ENCODE measurements at regions of chr17 and their contacts with region 1.

Region 1: DNA sequence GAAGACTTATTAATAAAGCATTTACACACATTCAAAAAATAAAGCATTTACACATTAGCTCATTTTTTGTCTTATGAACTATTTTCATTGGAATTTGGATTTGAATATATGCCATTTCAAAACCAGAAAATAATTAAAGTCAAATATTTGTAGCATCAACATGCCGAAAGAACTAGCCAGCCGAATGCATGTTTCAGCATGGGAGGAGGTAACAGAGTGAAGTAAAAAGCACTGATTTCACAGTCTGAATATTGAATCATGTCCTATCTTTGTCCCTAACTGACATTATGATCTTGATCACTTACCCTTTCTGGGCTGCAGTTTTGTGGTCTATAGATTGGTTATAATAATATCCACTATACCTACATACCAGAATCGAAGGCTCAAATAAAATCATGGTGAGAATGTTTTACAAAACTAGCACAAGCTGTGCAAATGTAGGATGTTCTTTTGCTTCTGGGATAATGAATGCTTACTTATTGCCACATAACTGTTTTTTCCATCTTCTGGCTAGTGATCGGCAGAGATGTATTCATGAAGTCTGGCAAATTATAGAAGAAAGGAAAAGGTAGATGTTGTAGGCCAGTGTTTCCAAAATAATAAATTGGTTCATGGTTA is 84.7 kb downstream of the TUBD1 start:
- DNase-seq: no peak
- H3K4me3 ChIP-seq: no peak overlapping the region
- H3K27ac ChIP-seq: no peak overlapping the region
- H3K4me1 ChIP-seq: no peaks in the 10 kb centered on the region
- H3K27me3 ChIP-seq: no peaks in the 10 kb centered on the region
- CTCF ChIP-seq: no peak
- POLR2A ChIP-seq: no peak

Region 2: GRCh38 chr17:59778996-59779395 is 29.0 kb before region 1 on chr17:
- CTCF ChIA-PET with region 1: no interaction called
- POLR2A ChIA-PET with region 1: no interaction called
- dilution Hi-C with region 1: no loop called
- intact Hi-C with region 1: no loop called
- DNase-seq: no peak
- H3K4me3 ChIP-seq: no peak overlapping the region
- H3K27ac ChIP-seq: no peak overlapping the region
- H3K4me1 ChIP-seq: peaks cover 19% of the 10 kb centered on the region
- H3K27me3 ChIP-seq: no peaks in the 10 kb centered on the region
- CTCF ChIP-seq: no peak
- POLR2A ChIP-seq: no peak

Region 3: DNA sequence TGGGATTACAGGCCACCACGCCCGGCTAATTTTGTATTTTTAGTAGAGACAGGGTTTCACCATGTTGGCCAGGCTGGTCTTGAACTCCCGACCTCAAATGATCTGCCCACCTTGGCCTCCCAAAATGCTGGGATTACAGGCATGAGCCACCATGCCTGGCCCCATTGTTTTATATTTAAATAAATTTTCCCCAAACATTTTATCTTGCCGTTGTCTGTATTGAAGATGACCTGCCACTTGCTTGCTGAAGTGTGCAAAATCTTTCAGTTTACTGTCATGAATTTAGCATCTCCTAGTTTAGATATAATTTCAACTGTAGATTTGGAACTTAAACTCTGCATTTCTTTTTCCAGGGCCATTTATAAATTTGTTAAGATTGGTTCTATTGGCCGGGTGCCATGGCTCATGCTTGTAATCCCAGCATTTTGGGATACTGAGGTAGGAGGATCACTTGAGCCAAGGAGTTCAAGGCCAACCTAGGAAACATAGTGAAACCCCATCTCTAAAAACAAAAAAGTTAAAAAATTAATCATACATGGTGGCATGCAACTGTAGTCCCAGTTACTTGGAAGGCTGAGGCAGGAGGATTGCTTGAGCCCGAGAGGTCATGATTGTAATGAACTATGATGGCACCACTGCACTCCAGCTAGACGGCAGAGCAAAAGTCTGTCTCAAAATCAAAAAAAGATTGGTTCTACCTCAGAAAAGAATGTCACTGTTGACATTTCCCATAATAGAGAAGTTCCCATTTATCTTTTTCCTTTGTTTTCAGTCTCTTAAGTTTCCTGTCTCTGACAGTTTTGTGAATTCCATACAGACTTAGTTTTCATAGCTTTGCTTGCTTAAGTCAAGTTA is 16.2 kb before region 1 on chr17:
- CTCF ChIA-PET with region 1: interaction called, 10 read pairs
- POLR2A ChIA-PET with region 1: no interaction called
- dilution Hi-C with region 1: no loop called
- intact Hi-C with region 1: no loop called
- DNase-seq: peak; percentile 85
- H3K4me3 ChIP-seq: no peak overlapping the region
- H3K27ac ChIP-seq: peak overlapping the region; percentile 94
- H3K4me1 ChIP-seq: peaks cover 37% of the 10 kb centered on the region
- H3K27me3 ChIP-seq: no peaks in the 10 kb centered on the region
- CTCF ChIP-seq: no peak
- POLR2A ChIP-seq: no peak

Measured in endothelial cell of umbilical vein (primary cell).